ENCODE measurements at regions of chr2 and their contacts with region 1.

Region 1: DNA sequence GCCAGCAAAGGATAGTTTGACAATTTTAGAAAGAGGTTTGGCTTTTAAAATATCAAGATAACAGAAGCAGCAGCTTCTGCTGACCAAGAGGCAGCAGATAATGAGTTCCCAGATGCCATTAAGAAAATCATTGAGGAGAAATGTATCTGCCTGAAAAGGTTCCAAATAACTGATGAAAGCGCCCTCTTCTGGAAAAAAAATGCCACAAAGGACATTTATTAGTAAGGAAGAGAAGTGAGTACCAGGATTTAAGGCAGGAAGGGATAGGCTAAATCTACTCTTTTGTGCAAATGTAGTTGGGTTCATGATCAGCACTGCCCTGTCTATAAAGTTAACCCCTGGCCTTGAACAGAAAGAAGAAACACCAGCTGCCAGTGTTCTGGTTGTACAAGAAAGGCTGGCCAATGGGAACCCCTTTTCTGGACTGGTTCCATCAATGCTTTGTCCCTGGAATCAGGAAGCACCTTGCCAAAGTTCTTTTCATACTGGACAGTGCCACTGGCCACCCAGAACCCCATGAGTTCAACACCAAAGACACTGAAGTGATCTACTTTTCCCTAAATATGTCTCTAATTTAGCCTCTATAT is 40.6 kb downstream of the DHX57 start:
- DNase-seq: peak; percentile 8
- ATAC-seq: no peak
- H3K4me3 ChIP-seq: no peak overlapping the region
- H3K4me3 Mint-ChIP-seq: no peak overlapping the region
- H3K27ac ChIP-seq: peak overlapping the region; percentile 30 to 72
- H3K27ac Mint-ChIP-seq: peak overlapping the region; percentile 94
- H3K4me1 ChIP-seq: peaks cover 44 to 50% of the 10 kb centered on the region in 2 donors
- H3K4me1 Mint-ChIP-seq: peaks cover 39% of the 10 kb centered on the region
- H3K27me3 ChIP-seq: no peaks in the 10 kb centered on the region
- H3K27me3 Mint-ChIP-seq: no peaks in the 10 kb centered on the region
- CTCF ChIP-seq: peak; percentile 19

Region 2: GRCh38 chr2:38771632-38772031 is 63.5 kb before region 1 on chr2:
- CTCF ChIA-PET with region 1: no interaction called
- POLR2A ChIA-PET with region 1: no interaction called
- intact Hi-C with region 1: loop called (anchors 10 kb)
- DNase-seq: no peak
- ATAC-seq: no peak
- H3K4me3 ChIP-seq: no peak overlapping the region
- H3K4me3 Mint-ChIP-seq: no peak overlapping the region
- H3K27ac ChIP-seq: no peak overlapping the region
- H3K27ac Mint-ChIP-seq: no peak overlapping the region
- H3K4me1 ChIP-seq: no peaks in the 10 kb centered on the region
- H3K4me1 Mint-ChIP-seq: no peaks in the 10 kb centered on the region
- H3K27me3 ChIP-seq: peaks cover 0 to 3% (median 0%) of the 10 kb centered on the region in 4 experiments
- H3K27me3 Mint-ChIP-seq: peaks cover 16% of the 10 kb centered on the region
- CTCF ChIP-seq: no peak

Region 3: DNA sequence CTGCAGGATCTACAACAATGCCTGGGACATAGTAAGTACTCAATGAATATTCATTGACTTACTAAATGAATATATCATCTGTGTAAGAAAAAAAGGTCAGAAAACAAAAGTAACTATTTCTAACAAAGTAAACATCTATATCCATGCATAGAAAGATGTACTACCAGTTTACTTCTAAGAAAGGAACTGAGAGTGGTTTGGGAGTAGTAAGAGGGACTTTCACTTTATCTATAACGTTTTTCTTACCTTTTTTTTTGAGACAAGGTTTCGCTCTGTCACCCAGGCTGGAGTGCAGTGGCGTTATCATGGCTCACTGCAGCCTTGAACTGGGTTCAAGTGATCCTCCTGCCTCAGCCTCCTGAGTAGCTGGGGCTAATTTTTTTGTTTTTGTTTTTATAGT is 14.9 kb after region 1 on chr2:
- CTCF ChIA-PET with region 1: interaction called, 11 read pairs
- POLR2A ChIA-PET with region 1: no interaction called
- intact Hi-C with region 1: no loop called
- DNase-seq: peak; percentile 15
- ATAC-seq: no peak
- H3K4me3 ChIP-seq: no peak overlapping the region
- H3K4me3 Mint-ChIP-seq: no peak overlapping the region
- H3K27ac ChIP-seq: peak overlapping the region in 1 of 2 donors; percentile 57
- H3K27ac Mint-ChIP-seq: peak overlapping the region; percentile 68
- H3K4me1 ChIP-seq: peaks cover 9 to 11% of the 10 kb centered on the region in 2 donors
- H3K4me1 Mint-ChIP-seq: peaks cover 15% of the 10 kb centered on the region
- H3K27me3 ChIP-seq: no peaks in the 10 kb centered on the region
- H3K27me3 Mint-ChIP-seq: no peaks in the 10 kb centered on the region
- CTCF ChIP-seq: no peak

Measured in B cell (primary cell).